Ascending aorta (tissue), 2 donors: ENCODE measurements at regions of chr4 and their contacts with region 1.

Region 1: GRCh38 chr4:156889616-156890594 is 81.7 kb downstream of the PDGFC start:
- DNase-seq: peak; percentile 40 to 65
- H3K4me3 ChIP-seq: no peak overlapping the region
- H3K27ac ChIP-seq: peak overlapping the region; percentile 46 to 56
- H3K4me1 ChIP-seq: peaks cover 3 to 10% of the 10 kb centered on the region in 2 donors
- H3K27me3 ChIP-seq: no peaks in the 10 kb centered on the region
- CTCF ChIP-seq: no peak

Region 2: GRCh38 chr4:156294577-156294976 is 595.3 kb before region 1 on chr4:
- intact Hi-C with region 1: no loop called
- DNase-seq: no peak
- H3K4me3 ChIP-seq: no peak overlapping the region
- H3K27ac ChIP-seq: no peak overlapping the region
- H3K4me1 ChIP-seq: no peaks in the 10 kb centered on the region
- H3K27me3 ChIP-seq: no peaks in the 10 kb centered on the region
- CTCF ChIP-seq: peak in 1 of 3 experiments; percentile 30

Region 3: DNA sequence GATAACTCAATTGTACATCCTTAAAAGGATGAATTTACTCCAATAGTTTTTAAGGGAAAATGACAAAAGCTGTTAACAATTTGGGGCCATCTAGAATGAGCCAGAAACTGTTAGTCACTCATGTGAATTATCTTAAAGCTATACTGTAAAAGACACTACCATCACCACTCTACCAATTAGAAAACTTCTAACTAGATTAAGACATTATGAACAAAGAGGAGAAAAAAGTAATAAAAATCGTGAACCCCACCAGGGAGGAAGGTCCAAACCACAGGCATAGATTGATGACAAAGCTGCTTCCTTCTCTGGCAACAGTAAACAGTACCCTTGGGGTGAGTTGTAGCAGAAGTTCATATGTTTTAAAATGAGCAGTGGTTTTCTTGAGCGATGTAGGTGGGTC is 24.5 kb before region 1 on chr4:
- intact Hi-C with region 1: no loop called
- DNase-seq: no peak
- H3K4me3 ChIP-seq: no peak overlapping the region
- H3K27ac ChIP-seq: no peak overlapping the region
- H3K4me1 ChIP-seq: peaks cover 0 to 4% of the 10 kb centered on the region in 2 donors
- H3K27me3 ChIP-seq: no peaks in the 10 kb centered on the region
- CTCF ChIP-seq: no peak

Region 4: DNA sequence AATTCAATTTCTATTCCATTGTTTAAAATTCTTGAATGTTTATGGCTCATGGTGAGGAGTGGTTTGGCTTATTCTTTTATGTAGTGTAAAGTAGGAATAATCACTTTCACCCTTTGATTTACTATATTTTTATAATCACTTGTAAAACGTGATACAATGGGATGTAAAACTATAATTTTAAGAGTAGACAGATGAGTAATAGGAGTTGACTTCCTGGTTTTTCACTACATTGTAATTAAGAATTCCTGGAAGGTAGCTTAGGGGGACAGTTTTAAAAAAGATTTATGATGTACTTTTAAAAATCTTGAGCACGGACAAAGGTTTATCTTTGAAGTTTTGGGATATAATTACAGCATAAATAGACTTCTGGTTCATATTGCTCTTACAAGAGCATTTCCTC is 16.4 kb after region 1 on chr4:
- intact Hi-C with region 1: no loop called
- DNase-seq: no peak
- H3K4me3 ChIP-seq: no peak overlapping the region
- H3K27ac ChIP-seq: no peak overlapping the region
- H3K4me1 ChIP-seq: peaks cover 0 to 5% of the 10 kb centered on the region in 2 donors
- H3K27me3 ChIP-seq: no peaks in the 10 kb centered on the region
- CTCF ChIP-seq: no peak

Region 5: DNA sequence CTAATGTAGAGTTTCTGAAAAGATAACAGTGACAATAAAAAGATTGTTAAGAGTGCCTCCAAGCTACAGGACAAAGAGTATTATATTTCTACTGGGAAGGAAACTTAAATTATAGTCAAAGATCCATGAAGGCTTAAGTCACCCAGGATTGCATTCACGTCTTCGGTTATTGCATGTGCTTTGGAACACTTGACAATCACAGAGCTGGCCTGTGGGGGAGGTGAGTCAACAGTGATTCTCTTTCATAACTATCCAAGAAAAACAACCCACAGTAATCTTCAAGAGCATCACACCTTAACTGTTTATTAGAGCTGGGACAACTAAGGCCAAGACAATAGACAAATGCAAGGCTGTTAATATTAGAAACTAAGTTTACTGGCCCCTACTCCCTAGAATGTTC is 41.4 kb after region 1 on chr4:
- intact Hi-C with region 1: loop called (anchors 5 kb)
- DNase-seq: no peak
- H3K4me3 ChIP-seq: no peak overlapping the region
- H3K27ac ChIP-seq: no peak overlapping the region
- H3K4me1 ChIP-seq: peaks cover 0 to 2% of the 10 kb centered on the region in 2 donors
- H3K27me3 ChIP-seq: no peaks in the 10 kb centered on the region
- CTCF ChIP-seq: no peak